Left ventricle myocardium inferior (tissue), 1 donor: ENCODE measurements at regions of chr11 and their contacts with region 1.

Region 1: GRCh38 chr11:59582006-59582405 is 33.6 kb downstream of the OSBP start:
- DNase-seq: no peak
- H3K4me3 ChIP-seq: no peak overlapping the region
- H3K27ac ChIP-seq: no peak overlapping the region
- H3K4me1 ChIP-seq: no peaks in the 10 kb centered on the region
- H3K27me3 ChIP-seq: no peaks in the 10 kb centered on the region
- CTCF ChIP-seq: no peak

Region 2: DNA sequence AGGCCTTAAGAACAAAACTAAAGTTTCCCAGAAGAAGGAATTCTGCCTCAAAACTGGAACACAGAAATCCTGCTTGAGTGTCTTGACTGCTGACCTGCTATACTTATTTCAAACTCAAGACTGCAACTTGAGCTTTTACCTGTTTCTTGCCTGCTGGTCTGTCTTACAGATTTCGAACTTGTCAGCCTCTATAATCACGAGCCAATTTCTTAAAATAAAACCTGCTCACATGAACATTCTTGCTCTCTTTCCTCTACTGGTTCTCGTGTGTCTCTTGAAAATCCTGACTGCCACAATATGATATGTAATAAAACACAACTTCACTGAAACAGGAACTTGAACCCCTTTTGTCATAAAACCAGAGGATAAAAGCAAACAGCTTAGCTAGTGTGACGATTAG is 72.9 kb after region 1 on chr11:
- intact Hi-C with region 1: loop called (anchors 5 kb)
- DNase-seq: no peak
- H3K4me3 ChIP-seq: no peak overlapping the region
- H3K27ac ChIP-seq: peak overlapping the region; percentile 50
- H3K4me1 ChIP-seq: no peaks in the 10 kb centered on the region
- H3K27me3 ChIP-seq: no peaks in the 10 kb centered on the region
- CTCF ChIP-seq: no peak